IMR-90 (cell line): ENCODE measurements at regions of chr9 and their contacts with region 1.

Region 1: GRCh38 chr9:97615439-97616072 is 17.6 kb downstream of the TSTD2 start:
- DNase-seq: peak; percentile 54
- ATAC-seq: peak; percentile 88
- H3K4me3 ChIP-seq: no peak overlapping the region
- H3K27ac ChIP-seq: no peak overlapping the region
- H3K4me1 ChIP-seq: no peaks in the 10 kb centered on the region
- H3K27me3 ChIP-seq: no peaks in the 10 kb centered on the region
- CTCF ChIP-seq: peak; percentile 79
- POLR2A ChIP-seq: no peak
- RAD21 ChIP-seq: peak; percentile 73

Region 2: GRCh38 chr9:96859461-96860198 is 755.9 kb before region 1 on chr9:
- CTCF ChIA-PET with region 1: no interaction called
- POLR2A ChIA-PET with region 1: no interaction called
- dilution Hi-C with region 1: no loop called
- in situ Hi-C with region 1: loop called (anchors 10 kb)
- intact Hi-C with region 1: no loop called
- DNase-seq: peak; percentile 76
- ATAC-seq: no peak
- H3K4me3 ChIP-seq: no peak overlapping the region
- H3K27ac ChIP-seq: no peak overlapping the region
- H3K4me1 ChIP-seq: no peaks in the 10 kb centered on the region
- H3K27me3 ChIP-seq: no peaks in the 10 kb centered on the region
- CTCF ChIP-seq: no peak
- POLR2A ChIP-seq: no peak
- RAD21 ChIP-seq: no peak

Region 3: GRCh38 chr9:97386733-97387503 is 228.6 kb before region 1 on chr9:
- CTCF ChIA-PET with region 1: no interaction called
- POLR2A ChIA-PET with region 1: no interaction called
- dilution Hi-C with region 1: no loop called
- in situ Hi-C with region 1: no loop called
- intact Hi-C with region 1: loop called (anchors 1 kb)
- DNase-seq: peak; percentile 56
- ATAC-seq: peak; percentile 96
- H3K4me3 ChIP-seq: no peak overlapping the region
- H3K27ac ChIP-seq: no peak overlapping the region
- H3K4me1 ChIP-seq: no peaks in the 10 kb centered on the region
- H3K27me3 ChIP-seq: peaks cover 2% of the 10 kb centered on the region; the same call in 1 of the 2 replicates
- CTCF ChIP-seq: peak; percentile 70
- POLR2A ChIP-seq: no peak
- RAD21 ChIP-seq: peak; percentile 47

Region 4: DNA sequence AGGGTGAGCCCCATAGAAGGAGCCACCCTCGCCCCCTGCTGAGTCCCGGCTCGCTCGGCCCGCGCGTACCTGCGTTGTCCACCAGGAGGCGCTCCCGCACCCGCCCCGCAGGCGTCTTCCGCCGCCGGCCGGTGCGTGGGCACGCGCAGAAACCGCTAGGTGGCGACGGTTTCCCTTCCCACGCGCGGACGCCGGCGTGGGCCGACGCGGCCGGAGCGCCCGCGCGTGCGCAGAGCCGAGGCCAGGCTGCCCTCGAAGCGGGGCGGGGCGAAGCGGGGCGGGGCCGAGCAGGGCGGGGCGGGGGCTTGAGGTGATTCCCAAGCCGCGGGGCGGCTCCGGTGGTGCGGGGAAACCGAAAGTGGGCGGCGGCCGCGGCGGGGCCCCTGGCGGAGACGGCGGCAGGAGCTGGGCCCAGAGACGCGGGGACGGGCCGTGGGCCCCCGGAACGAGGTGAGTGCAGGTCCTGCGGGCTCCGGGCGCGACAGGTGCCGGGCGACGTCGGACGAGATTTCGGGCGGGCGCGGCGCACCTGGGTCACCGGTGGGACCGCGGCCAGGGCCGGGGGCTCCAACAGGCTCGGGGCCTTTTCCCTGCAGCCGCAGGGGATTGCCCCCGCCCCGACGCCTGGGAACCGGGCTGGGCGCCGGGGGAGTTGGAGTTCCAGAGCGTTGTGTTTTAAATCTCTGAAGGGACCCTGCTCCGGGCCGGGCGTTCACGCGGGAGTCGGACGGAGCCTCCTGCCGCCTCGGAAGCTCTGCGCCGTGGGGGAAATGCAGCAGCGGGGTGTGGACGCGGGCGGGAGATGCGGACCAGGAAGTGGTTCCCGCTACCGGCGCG is 203.5 kb before region 1 on chr9 and contains the start of gene TDRD7:
- CTCF ChIA-PET with region 1: interaction called, 3 read pairs
- POLR2A ChIA-PET with region 1: no interaction called
- dilution Hi-C with region 1: no loop called
- in situ Hi-C with region 1: no loop called
- intact Hi-C with region 1: loop called (anchors 1 kb)
- DNase-seq: peak; percentile 75
- ATAC-seq: peak; percentile 96
- H3K4me3 ChIP-seq: peak within 1 kb of the TSS; percentile 85
- H3K27ac ChIP-seq: no peak within 1 kb of the TSS; the same call in 1 of the 2 replicates
- H3K4me1 ChIP-seq: peaks cover 3% of the 10 kb centered on the region; the same call in 1 of the 2 replicates
- H3K27me3 ChIP-seq: peaks cover 11% of the 10 kb centered on the region; the same call in 1 of the 2 replicates
- CTCF ChIP-seq: peak; percentile 100
- POLR2A ChIP-seq: no peak
- RAD21 ChIP-seq: peak; percentile 68
- total RNA-seq, gene TDRD7: 8.1 and 9.7 TPM in 2 replicates

Region 5: GRCh38 chr9:97468658-97469448 is 146.7 kb before region 1 on chr9:
- CTCF ChIA-PET with region 1: interaction called, 43 read pairs
- POLR2A ChIA-PET with region 1: no interaction called
- dilution Hi-C with region 1: no loop called
- in situ Hi-C with region 1: loop called (anchors 5 kb)
- intact Hi-C with region 1: loop called (anchors 1 kb)
- DNase-seq: peak; percentile 65
- ATAC-seq: peak; percentile 97
- H3K4me3 ChIP-seq: no peak overlapping the region
- H3K27ac ChIP-seq: no peak overlapping the region
- H3K4me1 ChIP-seq: peaks cover 2% of the 10 kb centered on the region
- H3K27me3 ChIP-seq: no peaks in the 10 kb centered on the region
- CTCF ChIP-seq: peak; percentile 95
- POLR2A ChIP-seq: peak; percentile 55; the same call in 1 of the 2 replicates
- RAD21 ChIP-seq: peak; percentile 98